Testis (tissue), 5 donors: ENCODE measurements at regions of chr6 and their contacts with region 1.

Region 1: DNA sequence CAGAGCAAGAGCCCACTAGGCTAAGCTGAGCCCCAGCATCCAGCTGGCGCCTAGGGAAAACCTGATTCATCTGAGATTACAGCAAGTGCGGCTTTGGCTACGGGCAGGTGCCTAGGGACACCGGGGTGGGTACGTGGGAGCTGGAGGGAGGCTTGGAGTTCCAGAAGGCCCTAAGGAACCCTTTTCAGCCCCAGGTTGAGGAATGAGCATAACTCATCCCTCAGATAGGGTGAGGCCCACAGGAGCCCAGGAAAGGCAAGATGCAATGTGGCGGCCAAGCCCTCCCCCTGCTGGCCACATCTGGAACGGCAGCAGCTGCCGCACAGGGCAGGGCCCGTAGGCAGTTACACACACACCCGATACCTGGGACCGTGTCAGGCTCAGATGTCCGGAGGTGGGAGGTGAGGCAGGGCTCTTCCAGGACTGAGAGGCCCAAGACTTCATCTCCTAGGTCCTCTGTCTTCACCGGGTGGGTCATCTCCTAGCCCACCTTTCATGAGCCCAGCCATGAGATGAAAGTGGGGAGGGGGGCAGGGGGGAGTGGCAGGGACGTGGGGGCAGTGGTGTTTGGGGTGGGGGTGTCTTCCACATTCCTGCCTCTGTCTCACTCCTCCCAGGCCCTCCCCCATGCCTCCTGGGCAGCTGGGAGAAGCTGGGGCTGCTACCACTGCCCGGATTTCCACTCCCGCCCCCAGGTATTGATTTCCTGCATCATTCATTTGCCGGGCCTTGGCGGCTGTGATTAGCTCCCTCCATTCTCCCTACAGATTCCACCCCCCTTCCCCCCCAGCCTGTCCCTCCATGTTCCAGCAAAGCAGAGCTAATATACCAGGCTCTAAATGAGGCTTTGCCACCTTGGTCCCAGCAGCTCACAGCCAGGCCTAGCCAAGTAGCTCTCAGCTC is 5.5 kb downstream of the MDGA1 start:
- DNase-seq: peak; percentile 85
- H3K4me3 ChIP-seq: no peak overlapping the region
- H3K27ac ChIP-seq: no peak overlapping the region
- H3K4me1 ChIP-seq: peaks cover 5% of the 10 kb centered on the region
- H3K27me3 ChIP-seq: no peaks in the 10 kb centered on the region
- CTCF ChIP-seq: peak; percentile 93 to 98 (median 94)
- POLR2A ChIP-seq: no peak

Region 2: GRCh38 chr6:37324131-37325033 is 367.8 kb before region 1 on chr6:
- intact Hi-C with region 1: loop called (anchors 10 kb)
- DNase-seq: no peak
- H3K4me3 ChIP-seq: no peak overlapping the region
- H3K27ac ChIP-seq: peak overlapping the region in 1 of 2 donors; percentile 15
- H3K4me1 ChIP-seq: peaks cover 9% of the 10 kb centered on the region
- H3K27me3 ChIP-seq: no peaks in the 10 kb centered on the region
- CTCF ChIP-seq: no peak
- POLR2A ChIP-seq: no peak

Region 3: DNA sequence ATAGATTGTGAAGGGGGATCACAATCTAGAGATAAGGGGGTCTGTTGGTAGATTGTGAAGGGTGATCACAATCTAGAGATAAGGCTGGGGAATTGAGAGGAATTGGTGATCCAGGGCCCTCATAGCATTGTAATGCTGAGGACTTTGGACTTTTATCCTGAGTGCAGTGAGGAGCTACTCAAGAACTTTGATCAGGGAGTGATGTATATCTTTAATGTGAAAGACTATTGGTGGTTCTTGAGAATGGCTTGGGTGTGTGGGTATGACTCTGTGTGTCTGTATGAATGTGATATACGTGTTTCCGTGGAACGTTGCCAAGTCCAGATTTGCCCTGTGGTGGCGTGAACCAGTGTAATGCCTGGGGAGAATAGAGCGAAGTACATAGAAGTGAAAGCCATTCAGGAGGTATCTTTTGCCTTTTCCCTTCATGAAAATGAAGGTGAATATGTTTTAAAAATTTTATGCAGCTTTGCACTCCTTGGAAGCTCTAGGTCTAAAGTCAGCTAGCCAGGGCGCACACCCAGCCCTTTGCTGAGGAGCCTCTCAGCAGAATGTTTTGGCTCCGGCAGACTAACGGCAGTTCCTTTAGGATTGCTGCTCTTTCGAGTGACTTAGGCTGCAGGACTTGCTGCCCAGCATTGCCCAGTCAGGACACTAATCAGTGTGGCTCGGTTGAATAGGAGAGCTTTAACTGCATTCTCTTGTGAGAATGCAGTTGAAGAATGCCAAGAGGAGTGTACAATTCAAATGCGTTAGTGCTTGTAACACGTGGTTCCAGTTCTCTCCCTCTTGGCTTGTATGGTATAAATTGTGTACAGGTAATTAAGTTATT is 130.9 kb after region 1 on chr6:
- intact Hi-C with region 1: no loop called
- DNase-seq: peak; percentile 30
- H3K4me3 ChIP-seq: no peak overlapping the region
- H3K27ac ChIP-seq: no peak overlapping the region
- H3K4me1 ChIP-seq: peaks cover 35% of the 10 kb centered on the region
- H3K27me3 ChIP-seq: no peaks in the 10 kb centered on the region
- CTCF ChIP-seq: no peak
- POLR2A ChIP-seq: no peak